Prostate gland (tissue), 2 donors: ENCODE measurements at regions of chr15 and their contacts with region 1.

Region 1: GRCh38 chr15:22786868-22787698 is 639 bp downstream of the NIPA1 start:
- DNase-seq: peak; percentile 8
- H3K4me3 ChIP-seq: peak overlapping the region; percentile 62 to 81
- H3K27ac ChIP-seq: peak overlapping the region; percentile 85 to 91
- H3K4me1 ChIP-seq: no peaks in the 10 kb centered on the region
- H3K27me3 ChIP-seq: no peaks in the 10 kb centered on the region
- CTCF ChIP-seq: no peak
- POLR2A ChIP-seq: no peak

Region 2: DNA sequence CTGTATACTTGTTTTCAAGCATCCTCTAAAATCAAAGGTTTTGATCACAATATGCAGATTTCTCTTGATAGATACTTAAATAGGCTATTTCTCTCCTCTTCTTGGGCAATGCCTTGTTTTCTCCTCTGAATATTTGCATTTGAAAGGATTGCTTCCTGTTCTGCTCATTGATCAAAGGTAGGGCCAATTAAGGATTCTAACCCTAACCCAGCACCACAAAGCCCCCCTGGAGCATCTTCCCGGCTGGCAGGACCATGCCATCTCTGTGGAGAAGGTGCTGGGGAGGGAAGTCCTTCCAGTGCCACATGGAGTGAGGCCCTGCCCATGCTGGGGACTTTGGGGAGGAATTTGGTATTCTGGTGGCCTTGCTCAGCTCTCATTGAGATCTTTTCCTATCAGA is 40.0 kb after region 1 on chr15:
- intact Hi-C with region 1: no loop called
- DNase-seq: no peak
- H3K4me3 ChIP-seq: no peak overlapping the region
- H3K27ac ChIP-seq: no peak overlapping the region
- H3K4me1 ChIP-seq: no peaks in the 10 kb centered on the region
- H3K27me3 ChIP-seq: no peaks in the 10 kb centered on the region
- CTCF ChIP-seq: no peak
- POLR2A ChIP-seq: no peak

Region 3: GRCh38 chr15:22838292-22839042 is 51.4 kb after region 1 on chr15 and contains the start of gene NIPA2:
- intact Hi-C with region 1: loop called (anchors 2 kb)
- DNase-seq: peak; percentile 97
- H3K4me3 ChIP-seq: peak within 1 kb of the TSS; percentile 75 to 85
- H3K27ac ChIP-seq: peak within 1 kb of the TSS; percentile 91 to 92
- H3K4me1 ChIP-seq: no peaks in the 10 kb centered on the region
- H3K27me3 ChIP-seq: no peaks in the 10 kb centered on the region
- CTCF ChIP-seq: peak in 3 of 4 experiments; percentile 10 to 34 (median 26)
- POLR2A ChIP-seq: peak; percentile 81
- total RNA-seq, gene NIPA2: 34.9 to 43.6 TPM